Left lung (tissue), 14 donors: ENCODE measurements at regions of chr1 and their contacts with region 1.

Region 1: DNA sequence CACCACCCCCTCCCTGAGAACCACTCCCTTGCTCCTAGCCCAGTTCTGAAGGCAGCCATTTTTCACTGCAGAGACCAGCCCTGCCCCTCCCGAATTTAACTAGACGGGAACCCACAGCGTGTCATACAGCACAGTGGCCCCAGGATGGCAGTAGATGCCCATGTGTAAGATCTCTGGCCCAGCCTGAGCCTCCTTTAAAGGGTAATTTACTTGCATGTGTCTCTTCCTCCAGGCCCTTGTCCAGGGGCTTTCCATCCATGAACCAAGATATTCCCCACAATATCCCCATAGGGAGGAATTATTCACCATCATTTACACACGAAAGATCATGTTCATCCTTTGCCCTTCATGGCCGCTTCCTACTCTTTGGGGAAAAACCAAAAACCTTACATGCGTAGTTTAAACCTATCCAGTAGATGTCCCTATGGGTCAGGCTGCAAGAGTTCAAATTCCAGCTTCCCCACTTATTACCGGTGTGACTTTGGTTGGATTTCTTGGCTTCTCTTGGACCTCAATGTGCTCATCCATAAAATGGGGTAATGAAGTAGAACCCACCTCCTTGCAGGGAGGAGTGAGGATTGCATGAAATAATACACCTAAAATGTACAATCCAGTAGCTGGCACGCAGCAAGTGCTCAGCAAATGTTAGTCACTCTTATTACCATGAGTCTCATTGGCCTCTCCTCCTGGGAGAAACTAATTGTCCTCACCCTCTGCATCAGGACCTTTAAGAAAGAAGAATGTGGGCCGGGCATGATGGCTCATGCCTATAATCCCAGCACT is 4.0 kb upstream of the LACTBL1 start:
- DNase-seq: peak in 3 of 4 donors; percentile 36 to 68 (median 58)
- ATAC-seq: peak; percentile 99
- H3K4me3 ChIP-seq: no peak overlapping the region
- H3K27ac ChIP-seq: no peak overlapping the region
- H3K4me1 ChIP-seq: no peaks in the 10 kb centered on the region
- H3K27me3 ChIP-seq: peaks cover 0 to 48% of the 10 kb centered on the region in 2 donors
- CTCF ChIP-seq: peak; percentile 48 to 53

Region 2: GRCh38 chr1:23273450-23274133 is 296.9 kb after region 1 on chr1:
- intact Hi-C with region 1: loop called in 1 of 2 experiments (anchors 10 kb)
- DNase-seq: peak in 1 of 4 donors; percentile 16
- ATAC-seq: no peak
- H3K4me3 ChIP-seq: no peak overlapping the region
- H3K27ac ChIP-seq: no peak overlapping the region
- H3K4me1 ChIP-seq: no peaks in the 10 kb centered on the region
- H3K27me3 ChIP-seq: peaks cover 0 to 40% of the 10 kb centered on the region in 2 donors
- CTCF ChIP-seq: no peak